ENCODE measurements at regions of chr2 and their contacts with region 1.

Region 1: DNA sequence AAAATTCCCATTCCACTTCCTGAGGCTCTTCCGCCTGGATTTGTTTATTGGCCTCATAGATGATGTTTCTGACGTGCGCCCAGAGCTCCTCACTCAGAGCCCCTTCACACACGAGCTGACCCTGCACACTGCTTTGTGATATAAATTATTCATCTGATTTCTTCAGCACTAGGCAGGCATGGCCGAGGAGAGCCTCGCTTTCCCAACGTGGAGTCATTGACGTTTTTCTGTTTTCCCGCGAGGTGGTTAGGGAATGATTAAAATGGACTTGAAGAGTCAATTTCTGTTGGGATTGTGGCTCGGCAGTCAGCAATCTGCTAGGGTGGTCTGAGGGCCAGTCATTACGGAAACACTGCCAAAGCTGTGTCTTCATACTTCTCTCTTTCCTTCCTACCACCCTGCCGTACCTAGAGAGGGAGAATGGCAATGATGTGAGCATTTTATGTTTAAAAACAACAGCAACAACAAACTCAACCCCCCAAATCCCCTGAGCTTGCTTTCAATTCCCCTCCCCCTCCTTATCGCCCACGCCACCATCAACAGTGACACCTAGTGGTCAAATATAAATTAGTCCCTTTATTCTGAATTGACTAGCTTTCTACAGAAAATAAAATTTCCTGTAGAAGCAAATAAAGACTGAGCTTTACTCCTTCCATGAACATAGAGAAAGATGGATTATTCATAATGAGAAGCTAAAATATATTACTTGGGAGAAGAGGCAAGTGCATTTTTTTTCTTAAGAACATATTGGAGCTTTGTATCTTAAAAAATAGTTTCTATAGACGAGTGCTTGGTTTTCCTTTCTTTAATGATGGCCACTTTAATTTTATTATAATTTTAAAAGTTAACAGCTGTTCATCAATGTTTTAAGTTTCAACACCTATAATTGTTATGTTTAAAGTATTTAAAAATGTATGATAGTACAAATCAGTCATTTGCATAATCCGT is 285.1 kb downstream of the MTX2 start:
- DNase-seq: peak; percentile 72
- ATAC-seq: peak; percentile 57
- H3K4me3 ChIP-seq: peak overlapping the region; percentile 25 to 60 (median 52)
- H3K4me3 Mint-ChIP-seq: peak overlapping the region; percentile 74
- H3K27ac ChIP-seq: no peak overlapping the region
- H3K27ac Mint-ChIP-seq: no peak overlapping the region
- H3K4me1 ChIP-seq: peaks cover 10 to 11% of the 10 kb centered on the region in 2 donors
- H3K4me1 Mint-ChIP-seq: peaks cover 10% of the 10 kb centered on the region
- H3K27me3 ChIP-seq: peaks cover 0 to 22% (median 14%) of the 10 kb centered on the region in 4 experiments
- H3K27me3 Mint-ChIP-seq: peaks cover 49% of the 10 kb centered on the region
- CTCF ChIP-seq: peak; percentile 76

Region 2: DNA sequence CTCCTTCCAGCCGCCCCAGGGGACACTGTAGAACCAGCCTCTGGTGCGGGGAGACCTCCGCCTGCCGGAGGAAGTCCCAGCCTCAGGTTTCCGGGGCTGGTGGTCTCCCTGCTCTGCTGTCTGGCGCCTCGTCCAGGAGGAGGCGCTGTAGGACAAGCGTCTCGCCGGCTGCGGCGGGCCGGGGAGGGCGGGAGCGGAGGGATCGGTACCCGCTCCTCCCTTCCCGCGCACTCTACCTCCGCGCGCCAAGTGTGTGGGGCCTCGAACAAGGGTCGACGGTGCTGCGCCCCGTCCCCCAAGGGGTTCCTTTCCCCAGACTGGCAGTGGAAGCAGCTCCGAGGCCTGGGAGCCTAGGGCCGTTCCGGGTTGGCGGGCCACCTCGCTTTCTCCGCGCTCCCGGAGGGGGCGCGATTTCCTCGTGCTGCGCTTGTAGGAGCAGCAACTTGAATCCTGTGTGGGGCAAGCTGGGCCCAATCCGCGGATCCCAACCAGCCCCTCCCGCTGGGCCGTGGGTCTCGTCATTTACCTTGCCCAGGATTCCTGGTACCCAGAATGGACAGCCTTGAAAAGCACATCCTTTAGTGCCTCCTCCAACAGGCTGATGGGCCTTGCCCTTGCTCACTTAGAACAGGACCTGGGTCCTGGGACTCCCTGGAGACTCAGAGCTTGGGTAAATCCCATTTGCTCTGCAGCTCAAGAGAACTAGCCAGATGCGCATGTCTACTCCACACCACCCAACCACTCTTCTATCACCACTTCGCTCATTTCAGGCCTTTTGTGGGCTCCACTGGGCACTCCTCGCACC is 413.7 kb before region 1 on chr2:
- CTCF ChIA-PET with region 1: interaction called, 26 read pairs
- POLR2A ChIA-PET with region 1: no interaction called
- intact Hi-C with region 1: loop called (anchors 5 kb)
- DNase-seq: peak; percentile 74
- ATAC-seq: peak; percentile 73
- H3K4me3 ChIP-seq: peak overlapping the region in 2 of 5 experiments; percentile 29 to 32
- H3K4me3 Mint-ChIP-seq: peak overlapping the region; percentile 42
- H3K27ac ChIP-seq: no peak overlapping the region
- H3K27ac Mint-ChIP-seq: no peak overlapping the region
- H3K4me1 ChIP-seq: peaks cover 19 to 38% of the 10 kb centered on the region in 2 donors
- H3K4me1 Mint-ChIP-seq: peaks cover 23% of the 10 kb centered on the region
- H3K27me3 ChIP-seq: peaks cover 0 to 90% (median 68%) of the 10 kb centered on the region in 4 experiments
- H3K27me3 Mint-ChIP-seq: peaks cover 76% of the 10 kb centered on the region
- CTCF ChIP-seq: peak; percentile 61

Region 3: DNA sequence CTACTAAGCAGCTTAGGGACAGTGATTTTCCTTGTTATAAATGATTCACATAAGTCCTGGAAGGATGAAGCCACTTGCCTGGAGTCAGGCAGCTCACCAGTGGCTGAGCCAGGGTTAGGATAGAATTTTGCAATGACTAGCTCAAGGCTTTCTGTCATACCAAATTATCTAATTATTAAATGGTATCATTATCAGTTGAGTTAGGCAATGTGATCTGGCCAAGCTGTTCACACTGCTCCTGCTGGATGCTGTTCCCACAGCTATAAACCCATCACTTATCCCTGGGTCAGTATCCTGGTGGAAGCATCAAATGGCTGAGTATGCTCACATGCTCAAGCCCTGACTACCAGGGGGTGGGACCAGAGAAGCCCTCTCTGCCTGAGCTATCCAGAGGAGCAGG is 49.9 kb before region 1 on chr2:
- CTCF ChIA-PET with region 1: no interaction called
- POLR2A ChIA-PET with region 1: no interaction called
- intact Hi-C with region 1: no loop called
- DNase-seq: no peak
- ATAC-seq: no peak
- H3K4me3 ChIP-seq: no peak overlapping the region
- H3K4me3 Mint-ChIP-seq: no peak overlapping the region
- H3K27ac ChIP-seq: no peak overlapping the region
- H3K27ac Mint-ChIP-seq: no peak overlapping the region
- H3K4me1 ChIP-seq: no peaks in the 10 kb centered on the region
- H3K4me1 Mint-ChIP-seq: no peaks in the 10 kb centered on the region
- H3K27me3 ChIP-seq: peaks cover 0 to 11% (median 2%) of the 10 kb centered on the region in 4 experiments
- H3K27me3 Mint-ChIP-seq: peaks cover 24% of the 10 kb centered on the region
- CTCF ChIP-seq: no peak

Region 4: GRCh38 chr2:176565641-176566323 is 11.4 kb after region 1 on chr2:
- CTCF ChIA-PET with region 1: interaction called, 13 read pairs
- POLR2A ChIA-PET with region 1: no interaction called
- intact Hi-C with region 1: no loop called
- DNase-seq: no peak
- ATAC-seq: no peak
- H3K4me3 ChIP-seq: no peak overlapping the region
- H3K4me3 Mint-ChIP-seq: no peak overlapping the region
- H3K27ac ChIP-seq: no peak overlapping the region
- H3K27ac Mint-ChIP-seq: no peak overlapping the region
- H3K4me1 ChIP-seq: no peaks in the 10 kb centered on the region
- H3K4me1 Mint-ChIP-seq: no peaks in the 10 kb centered on the region
- H3K27me3 ChIP-seq: peaks cover 0 to 8% (median 2%) of the 10 kb centered on the region in 4 experiments
- H3K27me3 Mint-ChIP-seq: peaks cover 48% of the 10 kb centered on the region
- CTCF ChIP-seq: no peak

Region 5: GRCh38 chr2:176626796-176627195 is 72.4 kb after region 1 on chr2:
- CTCF ChIA-PET with region 1: no interaction called
- POLR2A ChIA-PET with region 1: no interaction called
- intact Hi-C with region 1: no loop called
- DNase-seq: no peak
- ATAC-seq: no peak
- H3K4me3 ChIP-seq: no peak overlapping the region
- H3K4me3 Mint-ChIP-seq: no peak overlapping the region
- H3K27ac ChIP-seq: no peak overlapping the region
- H3K27ac Mint-ChIP-seq: no peak overlapping the region
- H3K4me1 ChIP-seq: no peaks in the 10 kb centered on the region
- H3K4me1 Mint-ChIP-seq: no peaks in the 10 kb centered on the region
- H3K27me3 ChIP-seq: peaks cover 0 to 6% (median 1%) of the 10 kb centered on the region in 4 experiments
- H3K27me3 Mint-ChIP-seq: peaks cover 58% of the 10 kb centered on the region
- CTCF ChIP-seq: no peak

Region 6: GRCh38 chr2:176638167-176639015 is 84.0 kb after region 1 on chr2:
- CTCF ChIA-PET with region 1: interaction called, 3 read pairs
- POLR2A ChIA-PET with region 1: no interaction called
- intact Hi-C with region 1: loop called (anchors 2 kb)
- DNase-seq: peak; percentile 65
- ATAC-seq: peak; percentile 51
- H3K4me3 ChIP-seq: peak overlapping the region in 4 of 5 experiments; percentile 31 to 62 (median 50)
- H3K4me3 Mint-ChIP-seq: peak overlapping the region; percentile 73
- H3K27ac ChIP-seq: no peak overlapping the region
- H3K27ac Mint-ChIP-seq: no peak overlapping the region
- H3K4me1 ChIP-seq: peaks cover 11 to 12% of the 10 kb centered on the region in 2 donors
- H3K4me1 Mint-ChIP-seq: peaks cover 8% of the 10 kb centered on the region
- H3K27me3 ChIP-seq: peaks cover 0 to 50% (median 39%) of the 10 kb centered on the region in 4 experiments
- H3K27me3 Mint-ChIP-seq: peaks cover 66% of the 10 kb centered on the region
- CTCF ChIP-seq: peak; percentile 72

Region 7: GRCh38 chr2:176924909-176925534 is 370.6 kb after region 1 on chr2:
- CTCF ChIA-PET with region 1: no interaction called
- POLR2A ChIA-PET with region 1: no interaction called
- intact Hi-C with region 1: no loop called
- DNase-seq: no peak
- ATAC-seq: no peak
- H3K4me3 ChIP-seq: no peak overlapping the region
- H3K4me3 Mint-ChIP-seq: no peak overlapping the region
- H3K27ac ChIP-seq: no peak overlapping the region
- H3K27ac Mint-ChIP-seq: no peak overlapping the region
- H3K4me1 ChIP-seq: no peaks in the 10 kb centered on the region
- H3K4me1 Mint-ChIP-seq: no peaks in the 10 kb centered on the region
- H3K27me3 ChIP-seq: no peaks in the 10 kb centered on the region
- H3K27me3 Mint-ChIP-seq: no peaks in the 10 kb centered on the region
- CTCF ChIP-seq: no peak

Region 8: GRCh38 chr2:177464549-177464948 is 910.2 kb after region 1 on chr2:
- CTCF ChIA-PET with region 1: no interaction called
- POLR2A ChIA-PET with region 1: no interaction called
- intact Hi-C with region 1: no loop called
- DNase-seq: no peak
- ATAC-seq: no peak
- H3K4me3 ChIP-seq: no peak overlapping the region
- H3K4me3 Mint-ChIP-seq: no peak overlapping the region
- H3K27ac ChIP-seq: no peak overlapping the region
- H3K27ac Mint-ChIP-seq: no peak overlapping the region
- H3K4me1 ChIP-seq: no peaks in the 10 kb centered on the region
- H3K4me1 Mint-ChIP-seq: no peaks in the 10 kb centered on the region
- H3K27me3 ChIP-seq: no peaks in the 10 kb centered on the region
- H3K27me3 Mint-ChIP-seq: no peaks in the 10 kb centered on the region
- CTCF ChIP-seq: no peak